HepG2 (cell line): ENCODE measurements at regions of chr19 and their contacts with region 1.

Region 1: DNA sequence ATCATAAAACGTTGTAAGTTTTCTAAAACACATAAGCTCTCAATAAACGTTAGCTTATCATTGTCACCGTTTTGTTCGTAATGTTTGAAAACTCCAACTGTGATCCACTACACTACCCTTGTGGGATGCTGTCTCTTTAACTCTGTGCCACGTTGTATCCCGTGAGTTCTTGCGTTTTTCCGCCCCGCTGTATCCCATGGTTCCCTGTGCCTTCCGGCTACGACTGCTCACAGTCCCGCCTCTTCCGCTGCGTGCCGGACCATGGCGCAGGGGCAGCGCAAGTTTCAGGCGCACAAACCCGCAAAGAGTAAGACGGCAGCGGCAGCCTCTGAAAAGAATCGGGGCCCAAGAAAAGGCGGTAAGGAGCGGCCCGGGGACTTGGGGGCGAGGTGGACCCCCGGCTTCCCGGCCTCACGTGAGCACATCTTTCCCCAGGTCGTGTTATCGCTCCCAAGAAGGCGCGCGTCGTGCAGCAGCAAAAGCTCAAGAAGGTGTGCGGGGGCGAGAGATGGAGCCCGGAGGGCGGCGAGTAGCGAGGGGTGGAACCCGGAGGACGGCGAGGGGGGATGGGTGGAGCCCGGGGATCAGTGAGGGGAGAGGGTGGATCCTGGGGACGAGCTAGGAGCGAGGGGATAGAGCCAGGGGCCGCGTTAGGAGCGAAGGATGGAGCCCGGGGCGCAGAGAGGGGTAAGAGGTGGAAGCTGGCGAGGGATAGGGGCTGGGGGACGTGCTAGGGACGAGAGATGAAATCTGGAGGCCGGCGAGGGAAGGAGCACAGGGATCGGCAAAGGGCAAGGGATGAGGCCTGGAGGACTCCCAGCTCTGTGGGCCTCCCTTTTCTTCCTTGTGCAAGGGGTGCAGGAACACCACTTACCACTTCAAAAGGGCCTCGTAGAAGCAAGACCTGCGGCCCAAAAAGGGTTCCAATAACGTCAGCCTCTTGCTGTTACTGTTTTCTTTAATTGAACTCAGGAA is at the start of gene C19orf53:
- DNase-seq: peak; percentile 81
- ATAC-seq: peak; percentile 99
- H3K4me3 ChIP-seq: peak within 1 kb of the TSS; percentile 88 to 99 (median 99)
- H3K27ac ChIP-seq: peak within 1 kb of the TSS; percentile 72
- H3K4me1 ChIP-seq: peaks cover 19% of the 10 kb centered on the region
- H3K27me3 ChIP-seq: no peaks in the 10 kb centered on the region
- CTCF ChIP-seq: peak; percentile 15; the same call in 1 of the 2 replicates
- EP300 ChIP-seq: no peak
- POLR2A ChIP-seq: peak in 1 of 2 experiments; percentile 85; a peak in 3 of 4 replicates
- RAD21 ChIP-seq: no peak; the same call in 1 of the 2 replicates
- total RNA-seq, gene C19orf53: 127 and 129 TPM in 2 replicates

Region 2: GRCh38 chr19:13731147-13731964 is 43.1 kb before region 1 on chr19:
- CTCF ChIA-PET with region 1: no interaction called
- POLR2A ChIA-PET with region 1: interaction called, 15 read pairs
- in situ Hi-C with region 1: no loop called
- intact Hi-C with region 1: no loop called
- DNase-seq: peak; percentile 95
- ATAC-seq: peak; percentile 100
- H3K4me3 ChIP-seq: peak overlapping the region; percentile 70 to 83 (median 79)
- H3K27ac ChIP-seq: peak overlapping the region; percentile 78
- H3K4me1 ChIP-seq: peaks cover 33% of the 10 kb centered on the region
- H3K27me3 ChIP-seq: no peaks in the 10 kb centered on the region
- CTCF ChIP-seq: no peak
- EP300 ChIP-seq: no peak
- POLR2A ChIP-seq: peak; percentile 84 to 93
- RAD21 ChIP-seq: 0 out of 2 replicates have a peak, but pooled peaks have one; percentile 12

Region 3: DNA sequence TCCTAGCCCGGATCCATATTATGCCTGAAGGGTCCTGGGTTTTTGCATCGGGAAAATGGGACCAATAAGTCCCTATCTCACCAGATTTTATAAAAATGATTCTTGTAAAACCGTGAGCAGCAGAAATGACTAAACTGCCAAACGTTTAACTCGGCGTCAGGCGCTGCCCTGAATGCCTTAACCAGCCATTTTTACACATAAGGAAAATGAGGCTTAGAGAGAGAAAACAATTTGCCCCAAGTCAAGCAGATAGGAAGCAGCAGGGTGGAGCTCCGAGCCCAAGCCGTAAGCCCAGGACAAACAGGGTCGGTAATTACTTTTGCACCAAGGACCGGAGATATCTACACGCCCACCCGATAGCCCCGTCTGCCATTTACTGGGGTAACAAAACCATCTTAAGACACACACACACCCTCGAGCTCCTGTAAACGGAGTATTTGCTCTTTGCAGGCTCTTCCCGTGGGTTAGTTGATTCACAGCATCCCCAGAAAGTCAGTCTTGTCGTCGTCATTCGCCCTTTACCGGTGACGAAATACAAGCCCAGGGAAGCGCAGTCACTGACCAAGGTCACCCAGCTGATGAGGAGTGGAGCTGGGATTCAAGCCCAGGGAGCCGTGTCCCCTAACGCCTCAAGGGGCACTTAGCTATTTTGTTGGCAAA is 26.2 kb before region 1 on chr19:
- CTCF ChIA-PET with region 1: no interaction called
- POLR2A ChIA-PET with region 1: interaction called, 20 read pairs
- in situ Hi-C with region 1: no loop called
- intact Hi-C with region 1: no loop called
- DNase-seq: no peak
- ATAC-seq: no peak
- H3K4me3 ChIP-seq: peak overlapping the region; percentile 69 to 98 (median 90)
- H3K27ac ChIP-seq: peak overlapping the region; percentile 66
- H3K4me1 ChIP-seq: peaks cover 33% of the 10 kb centered on the region
- H3K27me3 ChIP-seq: no peaks in the 10 kb centered on the region; a peak in 1 of 5 replicates
- CTCF ChIP-seq: no peak
- EP300 ChIP-seq: no peak
- POLR2A ChIP-seq: 0 out of 4 replicates have a peak, but pooled peaks of 1 of the 2 experiments have one; percentile 6
- RAD21 ChIP-seq: no peak

Region 4: DNA sequence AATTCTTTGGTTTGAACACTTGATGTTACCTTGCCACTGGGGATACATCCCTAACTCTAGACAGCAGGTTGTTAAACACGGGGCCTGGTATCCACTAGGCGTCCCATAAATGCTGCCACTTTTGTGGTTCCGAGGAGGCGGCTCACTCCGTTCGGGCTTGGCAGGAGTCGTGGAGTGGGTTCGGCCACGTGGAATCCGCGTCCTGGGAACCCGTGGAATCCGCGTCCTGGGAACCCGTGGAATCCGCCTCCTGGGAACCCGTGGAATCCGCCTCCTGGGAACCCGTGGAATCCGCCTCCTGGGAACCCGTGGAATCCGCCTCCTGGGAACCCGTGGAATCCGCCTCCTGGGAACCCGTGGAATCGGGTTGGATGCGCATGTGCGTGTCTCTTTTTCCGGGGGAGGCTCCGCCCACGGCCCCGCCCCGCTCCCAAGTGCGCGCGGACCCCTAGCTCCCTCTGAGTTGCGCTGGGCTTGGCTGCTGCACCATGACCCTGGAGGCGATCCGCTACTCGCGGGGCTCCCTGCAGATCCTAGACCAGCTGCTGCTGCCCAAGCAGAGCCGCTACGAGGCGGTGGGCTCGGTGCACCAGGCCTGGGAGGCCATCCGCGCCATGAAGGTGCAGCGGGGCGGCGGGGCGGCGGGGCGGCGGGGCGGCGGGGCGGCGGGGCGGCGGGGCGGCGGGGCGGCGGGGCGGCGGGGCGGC is 10.2 kb before region 1 on chr19 and contains the start of gene MRI1:
- CTCF ChIA-PET with region 1: no interaction called
- POLR2A ChIA-PET with region 1: interaction called, 19 read pairs
- in situ Hi-C with region 1: no loop called
- intact Hi-C with region 1: no loop called
- DNase-seq: peak; percentile 39
- ATAC-seq: peak; percentile 76
- H3K4me3 ChIP-seq: peak within 1 kb of the TSS; percentile 75 to 87 (median 76)
- H3K27ac ChIP-seq: peak within 1 kb of the TSS; percentile 67
- H3K4me1 ChIP-seq: peaks cover 32% of the 10 kb centered on the region
- H3K27me3 ChIP-seq: no peaks in the 10 kb centered on the region
- CTCF ChIP-seq: no peak; the same call in 1 of the 2 replicates
- EP300 ChIP-seq: no peak
- POLR2A ChIP-seq: peak; percentile 26 to 89; a peak in 3 of 4 replicates
- RAD21 ChIP-seq: no peak
- total RNA-seq, gene MRI1: 15.3 and 20.1 TPM in 2 replicates

Region 5: DNA sequence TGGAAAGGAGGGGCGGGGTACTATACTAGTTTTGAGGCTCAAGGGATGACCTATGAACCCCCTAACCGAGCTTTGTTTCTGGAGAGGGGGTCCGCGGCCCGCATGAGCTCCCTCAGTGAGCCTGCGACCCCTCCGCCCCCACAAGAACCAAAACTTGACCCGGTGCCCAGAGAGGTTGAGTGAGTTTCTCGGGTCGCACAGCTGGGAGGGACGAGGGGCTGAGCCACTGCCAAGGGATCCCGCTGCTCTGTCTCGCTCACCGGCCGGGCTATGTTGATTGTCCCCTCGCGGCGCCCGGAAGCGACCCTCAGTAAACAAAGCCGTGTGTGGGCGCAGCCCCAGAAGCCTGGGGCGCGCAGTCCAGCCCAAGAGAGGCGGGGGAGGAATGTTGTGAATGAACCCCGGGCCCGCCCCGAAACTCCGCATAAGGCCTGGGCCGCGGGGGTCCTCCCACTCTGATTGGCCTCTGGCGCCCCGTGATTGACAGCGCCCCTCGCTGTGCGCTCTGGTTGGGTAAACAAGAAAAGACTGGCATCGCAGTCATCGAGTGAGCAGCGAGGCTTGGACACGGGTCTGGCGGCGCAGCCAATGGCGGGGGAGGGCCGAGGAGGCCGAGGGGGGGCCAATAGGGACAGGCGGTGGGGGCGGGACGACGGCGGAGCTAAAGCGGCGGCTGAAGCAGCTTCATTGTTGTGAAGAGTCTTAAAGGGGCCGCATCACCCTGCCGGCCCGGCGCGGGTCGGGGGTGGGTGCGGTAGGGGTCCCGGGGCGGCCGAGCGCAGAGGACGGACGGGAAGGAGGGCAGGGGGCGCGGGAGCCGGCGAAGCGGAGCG is 20.5 kb after region 1 on chr19 and contains the start of gene ZSWIM4:
- CTCF ChIA-PET with region 1: no interaction called
- POLR2A ChIA-PET with region 1: interaction called, 19 read pairs
- in situ Hi-C with region 1: no loop called
- intact Hi-C with region 1: no loop called
- DNase-seq: peak; percentile 98
- ATAC-seq: peak; percentile 98
- H3K4me3 ChIP-seq: peak within 1 kb of the TSS; percentile 70 to 93 (median 91)
- H3K27ac ChIP-seq: peak within 1 kb of the TSS; percentile 48
- H3K4me1 ChIP-seq: peaks cover 31% of the 10 kb centered on the region
- H3K27me3 ChIP-seq: no peaks in the 10 kb centered on the region
- CTCF ChIP-seq: no peak
- EP300 ChIP-seq: 0 out of 4 replicates have a peak, but pooled peaks of 1 of the 2 experiments have one; percentile 22
- POLR2A ChIP-seq: peak in 1 of 2 experiments; percentile 42; a peak in 2 of 4 replicates
- RAD21 ChIP-seq: no peak
- total RNA-seq, gene ZSWIM4: 0.27 and 0.33 TPM in 2 replicates

Region 6: DNA sequence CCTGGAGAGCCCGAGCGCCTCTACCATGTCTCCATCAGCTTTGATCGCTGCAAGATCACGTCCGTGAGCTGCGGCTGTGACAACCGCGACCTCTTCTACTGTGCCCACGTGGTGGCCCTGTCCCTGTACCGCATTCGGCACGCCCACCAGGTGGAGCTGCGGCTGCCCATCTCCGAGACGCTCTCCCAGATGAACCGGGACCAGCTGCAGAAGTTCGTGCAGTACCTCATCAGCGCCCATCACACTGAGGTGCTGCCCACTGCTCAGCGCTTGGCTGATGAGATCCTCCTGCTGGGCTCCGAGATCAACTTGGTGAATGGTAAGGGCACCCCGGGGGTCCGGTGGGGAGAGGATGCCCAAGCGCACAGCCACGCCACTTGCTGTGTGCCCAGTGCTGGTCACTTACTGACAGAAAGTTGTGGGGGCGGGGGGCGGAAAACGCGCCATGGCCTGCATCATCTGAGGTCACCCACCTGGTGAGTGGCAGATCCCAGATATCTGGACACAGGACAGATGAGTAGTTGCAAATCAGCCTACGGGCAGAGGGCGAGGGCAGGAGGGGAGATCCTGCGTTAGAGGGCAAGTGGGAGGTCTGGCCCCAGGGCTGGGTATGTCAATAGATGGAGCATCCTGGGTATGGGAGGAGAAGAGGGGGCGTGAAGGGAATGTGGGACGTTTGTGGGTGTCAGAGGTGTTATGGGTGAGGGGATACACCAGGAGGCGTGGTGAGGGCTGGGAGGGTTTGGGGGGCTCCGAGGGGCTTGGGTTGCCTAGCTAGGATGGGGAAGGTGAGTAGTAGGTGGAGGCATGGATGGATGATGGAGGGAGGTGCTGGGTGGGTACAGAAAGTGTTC is 30.6 kb after region 1 on chr19:
- CTCF ChIA-PET with region 1: no interaction called
- POLR2A ChIA-PET with region 1: no interaction called
- in situ Hi-C with region 1: no loop called
- intact Hi-C with region 1: no loop called
- DNase-seq: peak; percentile 32
- ATAC-seq: peak; percentile 77
- H3K4me3 ChIP-seq: no peak overlapping the region
- H3K27ac ChIP-seq: no peak overlapping the region
- H3K4me1 ChIP-seq: peaks cover 11% of the 10 kb centered on the region
- H3K27me3 ChIP-seq: no peaks in the 10 kb centered on the region
- CTCF ChIP-seq: peak; percentile 77
- EP300 ChIP-seq: no peak
- POLR2A ChIP-seq: no peak
- RAD21 ChIP-seq: 0 out of 2 replicates have a peak, but pooled peaks have one; percentile 29

Region 7: DNA sequence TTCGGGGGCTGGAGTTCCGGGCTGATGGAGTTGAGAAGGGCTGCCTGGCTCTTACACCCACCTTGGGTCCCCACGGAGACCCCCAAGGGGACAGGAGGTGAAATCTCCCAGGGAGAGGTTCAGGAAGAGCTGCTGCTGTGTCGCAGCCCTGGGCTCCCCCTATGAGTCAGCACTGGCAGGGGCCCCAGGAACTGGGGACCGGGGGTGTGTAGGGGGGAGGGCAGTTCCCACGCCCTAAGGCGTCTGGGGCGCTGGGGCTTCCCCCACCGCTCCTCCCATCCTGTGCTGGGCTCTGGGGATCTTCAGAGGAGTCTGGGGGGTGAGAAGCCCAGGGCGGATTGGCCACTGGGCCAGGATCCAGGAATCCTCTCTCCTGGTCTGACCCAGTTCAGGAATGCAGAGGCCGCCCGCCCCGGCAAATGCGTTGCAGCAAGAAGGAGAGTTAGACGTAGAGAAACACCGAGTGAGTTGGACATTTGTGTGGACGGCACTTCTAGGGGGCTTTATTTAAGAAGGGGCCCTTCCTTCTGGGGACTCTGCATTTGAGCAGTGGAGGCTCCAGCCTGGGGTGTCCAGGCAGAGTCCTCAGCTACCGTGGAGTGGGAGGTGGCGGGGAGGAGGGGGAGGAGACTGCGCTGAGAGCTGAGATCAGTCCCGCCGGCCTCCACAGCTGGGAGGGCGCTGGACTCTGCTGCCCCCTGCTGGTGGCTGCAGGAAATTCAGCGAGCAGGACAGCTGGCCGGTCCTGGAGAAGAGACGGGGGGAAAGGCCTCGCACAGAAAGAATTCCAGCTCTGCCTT is 87.4 kb after region 1 on chr19:
- CTCF ChIA-PET with region 1: no interaction called
- POLR2A ChIA-PET with region 1: interaction called, 18 read pairs
- in situ Hi-C with region 1: no loop called
- intact Hi-C with region 1: no loop called
- DNase-seq: peak; percentile 77
- ATAC-seq: peak; percentile 82
- H3K4me3 ChIP-seq: peak overlapping the region; percentile 67 to 77 (median 75)
- H3K27ac ChIP-seq: peak overlapping the region; percentile 54
- H3K4me1 ChIP-seq: peaks cover 36% of the 10 kb centered on the region
- H3K27me3 ChIP-seq: peaks cover 0 to 9% of the 10 kb centered on the region in 2 experiments; a peak in 1 of 5 replicates
- CTCF ChIP-seq: peak; percentile 95
- EP300 ChIP-seq: no peak
- POLR2A ChIP-seq: no peak
- RAD21 ChIP-seq: peak; percentile 97

Region 8: GRCh38 chr19:14073261-14073924 is 298.9 kb after region 1 on chr19:
- CTCF ChIA-PET with region 1: no interaction called
- POLR2A ChIA-PET with region 1: no interaction called
- in situ Hi-C with region 1: loop called (anchors 25 kb)
- intact Hi-C with region 1: no loop called
- DNase-seq: no peak
- ATAC-seq: peak; percentile 46
- H3K4me3 ChIP-seq: peak overlapping the region; percentile 76 to 94 (median 80)
- H3K27ac ChIP-seq: peak overlapping the region; percentile 91
- H3K4me1 ChIP-seq: peaks cover 8% of the 10 kb centered on the region
- H3K27me3 ChIP-seq: no peaks in the 10 kb centered on the region; a peak in 2 of 5 replicates
- CTCF ChIP-seq: peak; percentile 32
- EP300 ChIP-seq: no peak
- POLR2A ChIP-seq: no peak
- RAD21 ChIP-seq: peak; percentile 75

Region 9: DNA sequence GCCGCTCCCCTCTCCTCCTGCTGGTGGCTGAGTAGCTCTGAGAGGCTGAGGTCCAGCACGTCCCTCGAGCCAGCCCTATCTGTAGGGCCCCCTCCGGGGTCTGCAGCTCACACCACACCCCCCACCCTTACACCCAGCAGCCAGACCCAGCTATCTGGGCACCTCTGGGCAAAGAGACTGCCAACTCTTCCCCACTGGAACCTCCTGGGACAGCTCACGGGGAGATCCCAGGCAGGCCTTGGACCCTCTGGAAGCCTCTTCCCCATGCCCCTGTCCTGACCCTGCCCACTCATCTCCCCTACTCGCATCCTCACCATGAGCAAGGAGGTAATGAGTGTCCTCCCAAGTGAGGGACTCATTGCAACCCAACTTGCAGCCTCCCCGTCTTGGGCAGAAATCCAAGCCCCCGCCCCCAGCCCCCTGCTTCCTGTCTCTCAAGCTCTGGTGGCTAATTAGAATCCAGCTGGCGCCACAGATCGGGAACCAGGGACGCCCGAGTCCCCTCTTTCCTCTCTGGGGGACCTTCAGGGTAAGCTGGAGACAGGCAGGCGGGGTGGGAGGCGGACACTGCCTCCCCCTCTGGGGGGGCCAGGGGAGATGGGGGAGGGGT is 409.3 kb after region 1 on chr19:
- CTCF ChIA-PET with region 1: no interaction called
- POLR2A ChIA-PET with region 1: no interaction called
- in situ Hi-C with region 1: no loop called
- intact Hi-C with region 1: no loop called
- DNase-seq: no peak
- ATAC-seq: peak; percentile 29
- H3K4me3 ChIP-seq: no peak overlapping the region
- H3K27ac ChIP-seq: no peak overlapping the region
- H3K4me1 ChIP-seq: peaks cover 22% of the 10 kb centered on the region
- H3K27me3 ChIP-seq: peaks cover 0 to 6% of the 10 kb centered on the region in 2 experiments; a peak in 1 of 5 replicates
- CTCF ChIP-seq: no peak
- EP300 ChIP-seq: no peak
- POLR2A ChIP-seq: no peak
- RAD21 ChIP-seq: no peak